PC-9 (cell line): ENCODE measurements at regions of chr14 and their contacts with region 1.

Region 1: DNA sequence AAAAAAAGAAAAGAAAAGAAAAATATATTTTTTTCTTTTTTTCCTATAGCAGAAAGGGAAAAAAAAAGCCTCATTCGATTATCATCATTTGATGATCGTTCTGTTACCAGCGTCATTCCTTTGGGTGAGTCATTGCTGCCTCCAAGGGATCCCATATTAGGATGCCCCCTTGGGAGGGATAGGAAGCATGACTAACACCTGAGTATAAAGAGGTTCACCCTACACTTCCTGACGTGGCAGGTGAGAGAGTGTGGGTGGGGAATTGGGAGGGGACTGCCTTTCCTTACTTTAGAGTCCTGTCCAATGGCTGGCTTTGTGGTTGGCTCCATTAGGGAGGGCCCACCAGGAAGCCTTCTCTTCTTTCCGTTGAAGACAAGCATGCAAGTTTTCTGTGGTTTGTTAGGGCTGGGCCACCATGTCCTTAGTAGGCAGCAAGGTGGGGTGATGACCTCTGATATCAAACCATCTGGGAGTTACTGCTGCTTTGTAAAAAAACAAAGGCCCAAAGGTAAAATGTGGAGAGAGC is 56.1 kb upstream of the FUT8 start:
- DNase-seq: peak; percentile 97 to 100
- H3K4me3 ChIP-seq: peak overlapping the region; percentile 54
- H3K27ac ChIP-seq: peak overlapping the region; percentile 95
- H3K4me1 ChIP-seq: peaks cover 82% of the 10 kb centered on the region
- H3K27me3 ChIP-seq: no peaks in the 10 kb centered on the region
- CTCF ChIP-seq: no peak; the same call in 1 of the 2 replicates

Region 2: GRCh38 chr14:65102441-65103149 is 253.8 kb before region 1 on chr14 and contains the start of gene MAX:
- CTCF ChIA-PET with region 1: no interaction called
- POLR2A ChIA-PET with region 1: no interaction called
- intact Hi-C with region 1: loop called (anchors 2 kb)
- DNase-seq: peak; percentile 96 to 99
- H3K4me3 ChIP-seq: peak within 1 kb of the TSS; percentile 88
- H3K27ac ChIP-seq: peak within 1 kb of the TSS; percentile 46
- H3K4me1 ChIP-seq: peaks cover 14% of the 10 kb centered on the region
- H3K27me3 ChIP-seq: no peaks in the 10 kb centered on the region
- CTCF ChIP-seq: no peak
- total RNA-seq, gene MAX: 76.1 and 84.1 TPM in 2 replicates

Region 3: GRCh38 chr14:65229751-65230749 is 126.3 kb before region 1 on chr14:
- CTCF ChIA-PET with region 1: no interaction called
- POLR2A ChIA-PET with region 1: no interaction called
- intact Hi-C with region 1: loop called (anchors 2 kb)
- DNase-seq: peak; percentile 42 to 59
- H3K4me3 ChIP-seq: no peak overlapping the region
- H3K27ac ChIP-seq: peak overlapping the region; percentile 24
- H3K4me1 ChIP-seq: peaks cover 71% of the 10 kb centered on the region
- H3K27me3 ChIP-seq: no peaks in the 10 kb centered on the region
- CTCF ChIP-seq: no peak

Region 4: GRCh38 chr14:65255536-65256461 is 100.6 kb before region 1 on chr14:
- CTCF ChIA-PET with region 1: interaction called, 3 read pairs
- POLR2A ChIA-PET with region 1: no interaction called
- intact Hi-C with region 1: loop called (anchors 1 kb)
- DNase-seq: peak; percentile 92
- H3K4me3 ChIP-seq: peak overlapping the region; percentile 47; the same call in 1 of the 2 replicates
- H3K27ac ChIP-seq: peak overlapping the region; percentile 98
- H3K4me1 ChIP-seq: peaks cover 86% of the 10 kb centered on the region
- H3K27me3 ChIP-seq: no peaks in the 10 kb centered on the region
- CTCF ChIP-seq: peak; percentile 38; the same call in 1 of the 2 replicates

Region 5: GRCh38 chr14:65287264-65288131 is 68.9 kb before region 1 on chr14:
- CTCF ChIA-PET with region 1: interaction called, 3 read pairs
- POLR2A ChIA-PET with region 1: interaction called, 5 read pairs
- intact Hi-C with region 1: loop called (anchors 1 kb)
- DNase-seq: no peak
- H3K4me3 ChIP-seq: no peak overlapping the region
- H3K27ac ChIP-seq: no peak overlapping the region
- H3K4me1 ChIP-seq: peaks cover 29% of the 10 kb centered on the region
- H3K27me3 ChIP-seq: no peaks in the 10 kb centered on the region
- CTCF ChIP-seq: no peak

Region 6: DNA sequence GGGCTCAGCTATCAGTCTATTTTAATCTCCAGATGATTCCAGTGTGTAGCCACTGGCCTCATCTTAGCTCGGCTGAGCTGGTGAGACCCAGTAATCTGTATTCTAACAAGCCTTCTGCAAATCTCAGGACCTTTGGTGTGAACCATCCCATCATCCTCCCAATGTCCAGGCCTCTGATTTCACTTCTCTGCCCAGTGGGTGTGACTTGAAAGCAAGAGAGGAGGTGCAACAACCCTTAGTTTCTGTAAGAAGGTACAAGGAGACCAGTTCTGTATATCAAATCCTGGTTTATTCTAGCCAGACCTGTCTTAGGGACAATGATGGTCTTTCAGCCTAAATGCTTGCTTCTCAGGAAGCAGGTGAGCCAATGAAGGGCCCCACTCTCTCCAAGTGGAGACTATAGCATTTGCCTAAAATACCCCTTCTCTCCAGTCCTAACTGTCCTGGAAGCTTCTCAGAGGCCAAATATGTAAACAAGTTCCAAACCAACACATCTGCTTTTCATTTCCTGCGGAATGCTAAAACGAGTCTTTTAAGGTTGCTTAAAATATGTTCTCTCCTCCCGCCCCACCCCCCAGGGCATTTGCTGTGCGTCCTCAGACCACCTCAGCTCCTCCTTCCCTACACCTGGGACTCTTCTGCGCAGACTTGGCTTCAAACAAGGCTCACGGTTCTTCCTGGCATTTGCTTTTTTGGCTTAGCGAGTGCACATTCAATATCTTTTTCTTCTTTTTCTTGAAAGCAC is 22.3 kb before region 1 on chr14:
- CTCF ChIA-PET with region 1: no interaction called
- POLR2A ChIA-PET with region 1: interaction called, 3 read pairs
- intact Hi-C with region 1: loop called (anchors 1 kb)
- DNase-seq: no peak
- H3K4me3 ChIP-seq: peak overlapping the region; percentile 23; the same call in 1 of the 2 replicates
- H3K27ac ChIP-seq: peak overlapping the region; percentile 92
- H3K4me1 ChIP-seq: peaks cover 61% of the 10 kb centered on the region
- H3K27me3 ChIP-seq: no peaks in the 10 kb centered on the region
- CTCF ChIP-seq: no peak